Motor neuron (in vitro differentiated cells): ENCODE measurements at regions of chr4 and their contacts with region 1.

Region 1: GRCh38 chr4:57426779-57427395 is 316.7 kb upstream of the IGFBP7 start:
- ATAC-seq: peak; percentile 57 to 97 (median 86)
- H3K4me3 ChIP-seq: no peak overlapping the region
- H3K27ac ChIP-seq: no peak overlapping the region
- H3K4me1 ChIP-seq: peaks cover 2 to 11% of the 10 kb centered on the region in 2 donors

Region 2: DNA sequence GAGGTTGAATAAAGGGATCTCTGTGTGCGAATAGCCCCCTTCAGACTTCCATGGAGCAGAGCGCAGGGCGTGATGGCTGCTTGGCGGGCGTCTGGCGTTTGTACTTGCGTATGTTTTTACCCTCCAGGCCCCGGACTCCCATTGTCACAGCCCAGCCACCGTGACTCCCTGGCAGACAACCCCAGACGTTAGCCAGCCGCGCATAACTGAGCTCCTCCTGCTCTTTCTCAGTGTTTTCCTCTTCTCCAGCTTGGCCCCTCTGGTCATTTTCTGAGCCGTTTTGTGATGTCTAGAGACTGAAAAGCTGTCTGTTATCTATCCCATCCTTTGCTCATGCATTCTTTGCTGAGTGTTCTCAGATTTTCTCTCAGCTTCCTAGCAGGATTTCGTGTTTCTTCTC is 371.0 kb before region 1 on chr4:
- in situ Hi-C with region 1: no loop called
- ATAC-seq: no peak
- H3K4me3 ChIP-seq: no peak overlapping the region
- H3K27ac ChIP-seq: no peak overlapping the region
- H3K4me1 ChIP-seq: no peaks in the 10 kb centered on the region

Region 3: DNA sequence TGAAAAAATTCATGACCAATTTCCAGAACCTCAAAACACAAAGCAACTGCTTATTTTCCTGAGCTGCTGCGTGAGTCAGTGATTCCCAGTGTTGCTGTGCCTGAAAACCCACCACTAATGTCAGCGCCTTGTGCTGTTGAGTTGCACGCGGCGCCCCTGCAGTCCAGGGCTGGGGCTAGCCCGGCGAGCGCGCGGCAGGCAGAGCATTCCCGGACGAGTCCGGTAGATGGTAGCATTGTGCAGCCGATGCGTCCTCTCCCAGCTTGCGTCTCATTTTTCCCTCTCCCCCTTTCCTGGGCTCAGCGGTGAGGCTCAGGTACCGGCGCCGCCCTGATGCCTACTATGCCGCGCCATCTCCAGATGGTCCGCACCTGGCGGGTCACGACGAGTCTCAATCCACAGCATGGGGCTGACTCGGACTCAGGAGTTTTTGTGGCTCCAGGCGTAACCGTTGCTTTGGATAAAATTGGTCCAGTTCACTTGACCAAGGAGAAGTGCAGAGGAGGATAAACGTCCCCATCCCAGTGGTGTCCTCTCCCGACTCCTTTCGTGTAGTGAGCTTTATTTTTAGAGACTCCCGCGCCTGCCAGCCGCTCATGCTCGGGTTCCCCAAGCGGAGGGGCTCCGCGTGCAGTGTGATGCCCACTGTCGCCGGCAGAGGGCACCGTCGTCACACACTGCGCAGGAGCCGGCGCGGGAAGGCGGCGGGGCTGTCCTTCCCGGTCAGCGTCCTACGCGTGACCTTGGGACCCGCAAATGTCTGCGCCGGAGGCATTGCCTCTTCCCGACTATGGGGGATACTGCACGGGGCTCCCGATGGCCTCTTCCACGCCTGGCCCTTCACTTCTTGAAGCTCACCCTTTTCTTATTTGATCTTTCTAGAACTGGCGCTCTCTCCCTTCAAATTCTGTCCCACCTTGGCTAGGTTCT is 263.1 kb before region 1 on chr4:
- in situ Hi-C with region 1: loop called in 2 of 9 experiments (anchors 10 to 25 kb)
- ATAC-seq: peak; percentile 79 to 98 (median 96)
- H3K4me3 ChIP-seq: peak overlapping the region; percentile 38 to 81 (median 51)
- H3K27ac ChIP-seq: peak overlapping the region; percentile 7 to 49
- H3K4me1 ChIP-seq: peaks cover 8 to 9% of the 10 kb centered on the region in 2 donors

Region 4: DNA sequence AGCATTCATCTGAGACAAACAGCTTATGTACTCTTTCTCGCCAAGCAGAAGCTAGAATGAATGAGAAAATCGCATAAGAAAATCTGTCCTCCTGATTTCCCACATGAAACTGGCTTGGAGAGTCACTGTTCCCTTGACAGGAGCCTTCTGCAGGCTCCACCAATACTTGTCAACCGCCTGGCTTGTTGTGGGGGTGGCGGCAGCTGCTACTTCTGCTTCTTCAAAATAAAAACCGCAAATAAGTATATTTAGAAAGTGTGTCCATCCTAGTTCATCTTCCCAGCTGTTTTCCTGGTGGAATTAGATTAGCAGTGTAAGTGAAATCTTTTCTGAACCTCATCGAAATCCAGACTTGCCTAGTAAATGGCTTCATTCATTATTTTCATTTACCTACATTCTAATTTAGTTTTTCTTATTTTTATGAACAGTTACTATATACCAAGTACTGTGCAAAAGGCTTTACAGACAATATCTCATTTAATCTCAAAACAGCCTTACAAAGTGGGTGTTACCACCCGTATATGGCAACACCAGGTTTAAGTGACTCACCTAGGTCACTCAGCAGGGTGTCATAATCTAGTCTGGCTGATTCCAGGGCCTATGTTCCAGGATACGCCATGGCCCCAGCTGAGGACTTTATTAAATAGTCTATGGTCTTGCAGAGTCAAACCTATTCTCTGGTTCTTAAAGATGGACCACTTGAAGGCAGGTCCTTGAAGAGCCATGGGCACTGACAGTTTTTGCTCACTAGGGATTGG is 212.1 kb before region 1 on chr4:
- in situ Hi-C with region 1: no loop called
- ATAC-seq: no peak
- H3K4me3 ChIP-seq: no peak overlapping the region
- H3K27ac ChIP-seq: no peak overlapping the region
- H3K4me1 ChIP-seq: no peaks in the 10 kb centered on the region

Region 5: GRCh38 chr4:57661517-57662090 is 234.7 kb after region 1 on chr4:
- in situ Hi-C with region 1: no loop called
- ATAC-seq: peak in 5 of 8 experiments; percentile 58 to 90 (median 72)
- H3K4me3 ChIP-seq: no peak overlapping the region
- H3K27ac ChIP-seq: no peak overlapping the region
- H3K4me1 ChIP-seq: no peaks in the 10 kb centered on the region